SK-N-SH (cell line): ENCODE measurements at regions of chr1 and their contacts with region 1.

Region 1: GRCh38 chr1:20981915-20982314 is 194.8 kb downstream of the EIF4G3 start:
- DNase-seq: peak; percentile 29
- H3K4me3 ChIP-seq: no peak overlapping the region
- H3K27ac ChIP-seq: peak overlapping the region; percentile 50 to 76
- H3K4me1 ChIP-seq: peaks cover 10 to 47% of the 10 kb centered on the region in 2 experiments
- H3K27me3 ChIP-seq: no peaks in the 10 kb centered on the region
- CTCF ChIP-seq: peak; percentile 42
- EP300 ChIP-seq: no peak
- RAD21 ChIP-seq: peak; percentile 73

Region 2: GRCh38 chr1:20992322-20993056 is 10.6 kb after region 1 on chr1:
- CTCF ChIA-PET with region 1: interaction called, 20 read pairs
- POLR2A ChIA-PET with region 1: no interaction called
- DNase-seq: no peak
- H3K4me3 ChIP-seq: no peak overlapping the region
- H3K27ac ChIP-seq: peak overlapping the region in 1 of 2 experiments; percentile 27; a peak in 2 of 4 replicates
- H3K4me1 ChIP-seq: peaks cover 8 to 25% of the 10 kb centered on the region in 2 experiments
- H3K27me3 ChIP-seq: no peaks in the 10 kb centered on the region
- CTCF ChIP-seq: no peak
- EP300 ChIP-seq: no peak
- RAD21 ChIP-seq: no peak